Activated T-helper 1 cell treated with anti-CD3 and anti-CD28 coated beads, Interleukin-12 subunit alpha, Interleukin-12 subunit beta, Interleukin-2, Interleukin-4 antibody, amounts not matched to agents 30 ng/mL and 10 ng/mL and 1 ng/mL, durations not matched to agents 14 hours and 24 hours and 36 hours (primary cell): ENCODE measurements at regions of chr3 and their contacts with region 1.

Region 1: GRCh38 chr3:105527949-105528348 is 161.2 kb downstream of the ALCAM start:
- DNase-seq: no peak
- H3K4me3 Mint-ChIP-seq: no peak overlapping the region
- H3K27ac Mint-ChIP-seq: no peak overlapping the region
- H3K4me1 Mint-ChIP-seq: peaks cover 26% of the 10 kb centered on the region
- H3K27me3 Mint-ChIP-seq: no peaks in the 10 kb centered on the region

Region 2: DNA sequence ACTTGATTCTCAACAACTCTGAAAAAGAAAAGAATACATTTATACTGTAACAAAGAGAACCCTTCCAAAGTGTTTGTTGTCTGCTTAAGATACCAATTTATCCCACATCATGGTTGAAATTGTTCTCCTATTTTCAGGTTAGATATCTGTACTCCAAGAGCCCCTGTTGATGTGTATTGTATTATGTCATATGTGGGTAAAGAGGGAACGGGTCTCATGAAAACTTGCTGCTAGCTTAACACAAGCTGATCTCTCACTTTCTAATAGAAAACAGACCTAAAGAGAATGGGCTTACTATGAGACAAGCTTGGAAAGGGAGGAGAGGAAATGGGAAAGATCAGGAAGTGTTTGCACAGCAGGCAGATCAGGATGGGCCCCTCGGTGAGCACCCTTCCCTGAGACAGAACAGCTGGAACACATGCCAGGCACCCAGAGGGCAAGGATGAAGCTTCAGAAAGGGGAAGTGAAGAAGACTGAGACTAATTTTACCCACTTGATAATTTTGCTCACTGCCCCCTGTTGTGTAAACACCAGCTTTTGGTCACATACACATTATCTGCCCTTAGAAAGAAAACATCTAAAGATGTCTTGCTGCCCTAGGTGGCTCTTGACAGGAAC is 1101.4 kb after region 1 on chr3:
- intact Hi-C with region 1: loop called (anchors 10 kb)
- DNase-seq: no peak
- H3K4me3 Mint-ChIP-seq: no peak overlapping the region
- H3K27ac Mint-ChIP-seq: no peak overlapping the region
- H3K4me1 Mint-ChIP-seq: no peaks in the 10 kb centered on the region
- H3K27me3 Mint-ChIP-seq: peaks cover 4% of the 10 kb centered on the region